ENCODE measurements at regions of chr17 and their contacts with region 1.

Region 1: DNA sequence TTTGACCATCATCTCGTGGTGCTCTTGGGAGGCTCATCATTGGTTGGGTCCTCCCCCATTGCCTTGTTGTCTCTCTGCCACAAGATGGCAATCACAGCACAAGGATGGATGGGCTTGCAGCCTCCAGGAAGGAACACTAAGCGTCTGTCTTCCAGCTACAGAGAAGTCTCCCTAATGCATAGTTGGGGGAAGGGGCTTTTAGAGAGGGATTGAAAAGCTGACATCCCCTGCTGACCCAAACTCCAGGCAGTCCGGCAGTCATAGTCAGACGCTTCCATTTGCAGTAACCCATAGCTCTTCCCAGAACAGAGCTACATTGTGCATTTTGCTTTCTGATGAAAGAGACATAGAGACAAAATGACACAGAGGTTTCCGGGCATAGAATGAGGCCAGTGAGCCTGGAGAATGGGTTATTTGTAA is 111.4 kb downstream of the UTP18 start:
- DNase-seq: peak in 11 of 14 experiments; percentile 19 to 81 (median 49)
- ATAC-seq: peak; percentile 46
- H3K4me3 ChIP-seq: no peak overlapping the region
- H3K4me3 Mint-ChIP-seq: no peak overlapping the region
- H3K27ac ChIP-seq: no peak overlapping the region
- H3K27ac Mint-ChIP-seq: no peak overlapping the region
- H3K4me1 ChIP-seq: peaks cover 12% of the 10 kb centered on the region
- H3K4me1 Mint-ChIP-seq: peaks cover 17% of the 10 kb centered on the region
- H3K27me3 ChIP-seq: no peaks in the 10 kb centered on the region
- H3K27me3 Mint-ChIP-seq: no peaks in the 10 kb centered on the region
- CTCF ChIP-seq: peak; percentile 61

Region 2: GRCh38 chr17:51435641-51436091 is 63.9 kb after region 1 on chr17:
- CTCF ChIA-PET with region 1: interaction called, 12 read pairs
- POLR2A ChIA-PET with region 1: no interaction called
- intact Hi-C with region 1: no loop called
- DNase-seq: peak in 13 of 14 experiments; percentile 16 to 73 (median 36)
- ATAC-seq: peak; percentile 49
- H3K4me3 ChIP-seq: no peak overlapping the region
- H3K4me3 Mint-ChIP-seq: peak overlapping the region; percentile 30
- H3K27ac ChIP-seq: no peak overlapping the region
- H3K27ac Mint-ChIP-seq: peak overlapping the region; percentile 63
- H3K4me1 ChIP-seq: peaks cover 44% of the 10 kb centered on the region
- H3K4me1 Mint-ChIP-seq: peaks cover 47% of the 10 kb centered on the region
- H3K27me3 ChIP-seq: no peaks in the 10 kb centered on the region
- H3K27me3 Mint-ChIP-seq: no peaks in the 10 kb centered on the region
- CTCF ChIP-seq: peak; percentile 36

Region 3: GRCh38 chr17:51461578-51462004 is 89.8 kb after region 1 on chr17:
- CTCF ChIA-PET with region 1: no interaction called
- POLR2A ChIA-PET with region 1: no interaction called
- intact Hi-C with region 1: loop called in 1 of 2 experiments (anchors 5 kb)
- DNase-seq: peak; percentile 13 to 73 (median 42)
- ATAC-seq: peak; percentile 79
- H3K4me3 ChIP-seq: no peak overlapping the region
- H3K4me3 Mint-ChIP-seq: no peak overlapping the region
- H3K27ac ChIP-seq: no peak overlapping the region
- H3K27ac Mint-ChIP-seq: no peak overlapping the region
- H3K4me1 ChIP-seq: no peaks in the 10 kb centered on the region
- H3K4me1 Mint-ChIP-seq: no peaks in the 10 kb centered on the region
- H3K27me3 ChIP-seq: no peaks in the 10 kb centered on the region
- H3K27me3 Mint-ChIP-seq: no peaks in the 10 kb centered on the region
- CTCF ChIP-seq: peak; percentile 71

Region 4: DNA sequence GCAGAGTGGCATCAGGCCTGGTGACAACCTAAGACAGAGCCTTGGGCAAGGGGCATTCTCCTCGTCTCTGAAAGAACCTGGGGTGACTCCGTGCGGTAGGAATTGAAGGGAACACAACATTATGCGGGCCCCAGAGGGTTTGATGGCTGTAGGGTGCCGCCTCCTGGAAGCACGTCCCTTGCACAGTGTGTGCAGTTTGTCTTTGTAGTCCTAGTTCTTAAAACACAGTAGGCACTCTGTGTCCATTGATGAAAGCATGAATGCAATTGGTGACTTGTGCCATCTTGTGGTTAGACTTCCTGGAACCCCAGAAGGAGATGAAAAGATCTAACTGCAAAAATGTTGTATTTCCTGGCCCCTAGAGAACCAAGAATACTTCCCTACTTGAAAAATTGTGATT is 168.4 kb after region 1 on chr17:
- CTCF ChIA-PET with region 1: interaction called, 4 read pairs
- POLR2A ChIA-PET with region 1: no interaction called
- intact Hi-C with region 1: loop called in 1 of 2 experiments (anchors 5 kb)
- DNase-seq: peak in 7 of 14 experiments; percentile 0 to 33 (median 30)
- ATAC-seq: peak; percentile 51
- H3K4me3 ChIP-seq: no peak overlapping the region
- H3K4me3 Mint-ChIP-seq: no peak overlapping the region
- H3K27ac ChIP-seq: no peak overlapping the region
- H3K27ac Mint-ChIP-seq: peak overlapping the region; percentile 30
- H3K4me1 ChIP-seq: no peaks in the 10 kb centered on the region
- H3K4me1 Mint-ChIP-seq: peaks cover 15% of the 10 kb centered on the region
- H3K27me3 ChIP-seq: no peaks in the 10 kb centered on the region
- H3K27me3 Mint-ChIP-seq: no peaks in the 10 kb centered on the region
- CTCF ChIP-seq: peak; percentile 51

Region 5: GRCh38 chr17:51640108-51640622 is 268.4 kb after region 1 on chr17:
- CTCF ChIA-PET with region 1: interaction called, 6 read pairs
- POLR2A ChIA-PET with region 1: no interaction called
- intact Hi-C with region 1: loop called (anchors 1 to 5 kb)
- DNase-seq: peak in 6 of 14 experiments; percentile 2 to 37 (median 17)
- ATAC-seq: no peak
- H3K4me3 ChIP-seq: no peak overlapping the region
- H3K4me3 Mint-ChIP-seq: no peak overlapping the region
- H3K27ac ChIP-seq: no peak overlapping the region
- H3K27ac Mint-ChIP-seq: no peak overlapping the region
- H3K4me1 ChIP-seq: no peaks in the 10 kb centered on the region
- H3K4me1 Mint-ChIP-seq: no peaks in the 10 kb centered on the region
- H3K27me3 ChIP-seq: peaks cover 0 to 6% of the 10 kb centered on the region in 2 experiments
- H3K27me3 Mint-ChIP-seq: peaks cover 15% of the 10 kb centered on the region
- CTCF ChIP-seq: peak; percentile 54

Region 6: DNA sequence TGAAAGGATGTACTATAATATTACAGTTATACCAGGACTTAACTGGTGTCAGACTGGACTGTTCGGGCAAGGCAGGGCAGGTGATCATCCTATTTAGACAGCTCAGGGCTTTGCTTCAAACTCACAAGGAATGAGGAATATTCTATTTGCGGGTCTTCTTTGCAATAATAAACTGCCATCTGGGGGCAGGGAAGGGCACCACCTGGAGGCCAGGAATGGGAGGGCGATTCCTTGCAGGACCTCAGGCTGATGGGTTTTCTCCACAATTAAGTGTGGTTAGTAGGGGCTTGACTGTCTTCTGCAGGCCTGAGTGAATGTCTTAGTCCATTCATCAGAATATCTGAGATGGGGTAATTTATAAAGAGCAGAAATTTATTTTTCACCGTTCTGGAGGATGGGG is 362.7 kb after region 1 on chr17:
- CTCF ChIA-PET with region 1: no interaction called
- POLR2A ChIA-PET with region 1: no interaction called
- intact Hi-C with region 1: loop called in 1 of 2 experiments (anchors 2 kb)
- DNase-seq: peak in 2 of 14 experiments; percentile 2 to 22
- ATAC-seq: no peak
- H3K4me3 ChIP-seq: no peak overlapping the region
- H3K4me3 Mint-ChIP-seq: no peak overlapping the region
- H3K27ac ChIP-seq: no peak overlapping the region
- H3K27ac Mint-ChIP-seq: no peak overlapping the region
- H3K4me1 ChIP-seq: no peaks in the 10 kb centered on the region
- H3K4me1 Mint-ChIP-seq: no peaks in the 10 kb centered on the region
- H3K27me3 ChIP-seq: peaks cover 0 to 6% of the 10 kb centered on the region in 2 experiments
- H3K27me3 Mint-ChIP-seq: peaks cover 33% of the 10 kb centered on the region
- CTCF ChIP-seq: peak; percentile 13

Region 7: GRCh38 chr17:52106638-52107261 is 735.0 kb after region 1 on chr17:
- CTCF ChIA-PET with region 1: no interaction called
- POLR2A ChIA-PET with region 1: no interaction called
- intact Hi-C with region 1: loop called (anchors 5 to 10 kb)
- DNase-seq: peak in 8 of 14 experiments; percentile 0 to 48 (median 32)
- ATAC-seq: no peak
- H3K4me3 ChIP-seq: no peak overlapping the region
- H3K4me3 Mint-ChIP-seq: no peak overlapping the region
- H3K27ac ChIP-seq: no peak overlapping the region
- H3K27ac Mint-ChIP-seq: no peak overlapping the region
- H3K4me1 ChIP-seq: no peaks in the 10 kb centered on the region
- H3K4me1 Mint-ChIP-seq: no peaks in the 10 kb centered on the region
- H3K27me3 ChIP-seq: peaks cover 0 to 3% of the 10 kb centered on the region in 2 experiments
- H3K27me3 Mint-ChIP-seq: peaks cover 22% of the 10 kb centered on the region
- CTCF ChIP-seq: peak; percentile 54

Measured in CD4-positive, alpha-beta T cell (primary cell).